Adrenal gland (tissue), 19 donors: ENCODE measurements at regions of chr12 and their contacts with region 1.

Region 1: GRCh38 chr12:108193917-108194316 is 64.8 kb downstream of the WSCD2 start:
- DNase-seq: peak in 5 of 7 donors; percentile 20 to 44 (median 25)
- H3K4me3 ChIP-seq: no peak overlapping the region
- H3K27ac ChIP-seq: no peak overlapping the region
- H3K4me1 ChIP-seq: no peaks in the 10 kb centered on the region
- H3K27me3 ChIP-seq: no peaks in the 10 kb centered on the region
- CTCF ChIP-seq: peak; percentile 54 to 76 (median 59)
- POLR2A ChIP-seq: no peak

Region 2: GRCh38 chr12:107670999-107671643 is 522.8 kb before region 1 on chr12:
- intact Hi-C with region 1: loop called in 1 of 2 experiments (anchors 10 kb)
- DNase-seq: peak in 5 of 7 donors; percentile 22 to 58 (median 38)
- H3K4me3 ChIP-seq: no peak overlapping the region
- H3K27ac ChIP-seq: no peak overlapping the region
- H3K4me1 ChIP-seq: no peaks in the 10 kb centered on the region
- H3K27me3 ChIP-seq: peaks cover 10% of the 10 kb centered on the region
- CTCF ChIP-seq: peak; percentile 30 to 59 (median 46)
- POLR2A ChIP-seq: no peak

Region 3: DNA sequence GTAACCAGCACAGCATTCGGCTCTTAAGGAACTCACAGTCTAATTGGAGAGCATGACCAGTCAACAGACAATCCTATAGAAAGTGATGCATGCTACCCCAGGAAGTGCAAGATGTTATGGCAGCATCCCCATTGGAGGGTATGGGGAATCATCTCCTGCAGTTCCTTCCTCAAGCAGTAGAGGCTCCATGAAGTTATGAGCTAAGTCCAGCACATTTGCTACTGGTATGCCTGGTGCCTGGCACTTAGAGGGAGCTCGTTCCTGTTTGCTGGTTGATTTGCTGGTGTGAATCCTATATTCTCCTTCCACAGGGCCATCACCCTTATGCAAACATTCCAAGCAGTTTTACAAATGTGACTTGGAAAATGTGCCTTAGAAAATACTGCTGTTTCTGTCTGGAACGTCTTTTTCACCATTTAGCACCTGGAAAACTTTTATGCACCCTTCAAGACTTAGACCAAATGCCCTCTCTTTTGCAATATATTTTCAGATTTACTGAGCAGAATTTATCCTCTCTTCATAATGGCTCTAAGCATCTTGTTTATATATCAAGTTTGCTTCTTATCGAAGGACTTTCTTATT is 201.0 kb before region 1 on chr12:
- intact Hi-C with region 1: loop called in 1 of 2 experiments (anchors 10 kb)
- DNase-seq: peak; percentile 13 to 53 (median 26)
- H3K4me3 ChIP-seq: no peak overlapping the region
- H3K27ac ChIP-seq: no peak overlapping the region
- H3K4me1 ChIP-seq: no peaks in the 10 kb centered on the region
- H3K27me3 ChIP-seq: peaks cover 5% of the 10 kb centered on the region
- CTCF ChIP-seq: peak; percentile 30 to 58 (median 45)
- POLR2A ChIP-seq: no peak

Region 4: GRCh38 chr12:108237272-108237671 is 43.4 kb after region 1 on chr12:
- intact Hi-C with region 1: no loop called
- DNase-seq: no peak
- H3K4me3 ChIP-seq: no peak overlapping the region
- H3K27ac ChIP-seq: no peak overlapping the region
- H3K4me1 ChIP-seq: no peaks in the 10 kb centered on the region
- H3K27me3 ChIP-seq: no peaks in the 10 kb centered on the region
- CTCF ChIP-seq: no peak
- POLR2A ChIP-seq: no peak

Region 5: GRCh38 chr12:108305520-108305919 is 111.6 kb after region 1 on chr12:
- intact Hi-C with region 1: no loop called
- DNase-seq: peak; percentile 51 to 89 (median 68)
- H3K4me3 ChIP-seq: no peak overlapping the region
- H3K27ac ChIP-seq: peak overlapping the region in 4 of 5 donors; percentile 1 to 82 (median 59)
- H3K4me1 ChIP-seq: peaks cover 4 to 55% of the 10 kb centered on the region in 2 donors
- H3K27me3 ChIP-seq: no peaks in the 10 kb centered on the region
- CTCF ChIP-seq: no peak
- POLR2A ChIP-seq: no peak